Activated naive CD4-positive, alpha-beta T cell treated with anti-CD3 and anti-CD28 coated beads for 36 hours (primary cell): ENCODE measurements at regions of chr7 and their contacts with region 1.

Region 1: DNA sequence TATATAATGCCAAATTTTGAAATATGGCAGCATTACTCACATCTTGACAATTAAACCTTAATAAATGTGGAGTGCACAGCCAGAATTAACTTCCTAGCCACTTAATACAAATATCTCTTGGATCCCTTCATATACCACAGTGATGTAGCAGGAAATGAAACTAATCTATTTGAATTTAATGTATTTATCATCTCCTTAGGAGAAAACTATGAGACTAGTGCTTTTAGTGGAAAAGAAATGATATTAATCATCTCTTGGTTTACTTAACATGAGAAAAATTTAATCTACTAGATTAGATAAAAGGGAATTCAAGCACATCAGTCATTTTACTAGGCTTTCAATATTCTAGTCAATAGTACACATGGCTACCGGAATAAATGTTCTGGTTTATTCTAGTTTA is 55.7 kb upstream of the GPR22 start:
- DNase-seq: no peak
- H3K4me3 Mint-ChIP-seq: no peak overlapping the region
- H3K27ac Mint-ChIP-seq: no peak overlapping the region
- H3K4me1 Mint-ChIP-seq: no peaks in the 10 kb centered on the region
- H3K27me3 Mint-ChIP-seq: no peaks in the 10 kb centered on the region

Region 2: DNA sequence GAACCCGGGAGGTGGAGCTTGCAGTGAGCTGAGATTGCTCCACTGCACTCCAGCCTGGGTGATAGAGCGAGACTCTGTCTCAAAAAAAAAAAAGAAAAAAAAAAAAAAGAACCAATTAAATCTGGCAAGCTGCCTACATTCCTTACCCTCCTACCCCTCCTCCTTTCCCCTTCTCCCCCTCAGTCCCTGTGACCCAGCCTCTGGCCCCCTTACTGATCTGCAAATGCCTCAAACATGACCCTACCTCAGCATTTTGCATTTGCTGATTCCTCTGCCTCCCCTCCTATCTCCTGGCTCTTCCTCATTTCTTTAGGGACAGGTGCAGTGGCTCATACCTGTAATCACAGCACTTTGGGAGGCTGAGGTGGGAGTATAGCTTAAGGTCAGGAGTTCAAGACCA is 1431.8 kb before region 1 on chr7:
- CTCF ChIA-PET with region 1: interaction called, 10 read pairs
- intact Hi-C with region 1: no loop called
- DNase-seq: no peak
- H3K4me3 Mint-ChIP-seq: no peak overlapping the region
- H3K27ac Mint-ChIP-seq: no peak overlapping the region
- H3K4me1 Mint-ChIP-seq: no peaks in the 10 kb centered on the region
- H3K27me3 Mint-ChIP-seq: no peaks in the 10 kb centered on the region